AG04450 (cell line): ENCODE measurements at regions of chr1 and their contacts with region 1.

Region 1: GRCh38 chr1:8154621-8155052 is 128.5 kb upstream of the ERRFI1 start:
- DNase-seq: no peak
- H3K4me3 ChIP-seq: no peak overlapping the region
- H3K27ac ChIP-seq: peak overlapping the region; percentile 31
- H3K27me3 ChIP-seq: no peaks in the 10 kb centered on the region
- CTCF ChIP-seq: no peak

Region 2: GRCh38 chr1:8137481-8138244 is 17.0 kb before region 1 on chr1:
- CTCF ChIA-PET with region 1: no interaction called
- POLR2A ChIA-PET with region 1: interaction called, 10 read pairs
- DNase-seq: peak; percentile 92
- H3K4me3 ChIP-seq: peak overlapping the region; percentile 41
- H3K27ac ChIP-seq: peak overlapping the region; percentile 89
- H3K27me3 ChIP-seq: no peaks in the 10 kb centered on the region
- CTCF ChIP-seq: no peak

Region 3: DNA sequence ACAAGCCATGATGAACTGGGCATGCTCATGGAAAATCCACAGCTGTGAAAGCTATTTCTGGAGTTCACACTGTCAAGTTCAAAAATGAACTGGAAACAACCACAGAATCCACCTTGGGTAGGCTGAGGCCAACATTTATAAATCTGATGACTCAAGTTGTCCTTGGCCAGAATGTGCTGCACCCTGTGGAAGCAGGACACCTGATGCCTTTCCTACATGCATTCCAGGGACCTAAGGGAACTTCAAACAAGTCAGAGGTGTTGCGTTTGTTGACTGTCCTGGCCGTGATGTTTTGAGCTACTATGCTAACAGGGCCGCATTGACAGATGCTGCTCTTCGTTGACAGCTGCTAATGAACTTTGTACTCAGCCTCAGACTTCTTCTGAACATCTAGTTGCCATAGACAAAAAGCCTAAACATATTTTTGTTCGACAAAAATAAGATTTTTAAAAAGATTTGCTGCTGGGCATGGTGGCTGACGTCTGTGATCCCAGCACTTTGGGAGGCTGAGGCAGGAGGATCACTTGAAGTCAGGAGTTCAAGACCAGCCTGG is 35.4 kb after region 1 on chr1:
- CTCF ChIA-PET with region 1: no interaction called
- POLR2A ChIA-PET with region 1: no interaction called
- DNase-seq: no peak
- H3K4me3 ChIP-seq: no peak overlapping the region
- H3K27ac ChIP-seq: no peak overlapping the region
- H3K27me3 ChIP-seq: no peaks in the 10 kb centered on the region
- CTCF ChIP-seq: no peak